Right lobe of liver (tissue), 6 donors: ENCODE measurements at regions of chr3 and their contacts with region 1.

Region 1: GRCh38 chr3:108662130-108662738 is 72.7 kb downstream of the DZIP3 start:
- DNase-seq: no peak
- ATAC-seq: peak; percentile 93 to 99 (median 97)
- H3K4me3 ChIP-seq: no peak overlapping the region
- H3K27ac ChIP-seq: no peak overlapping the region
- H3K4me1 ChIP-seq: no peaks in the 10 kb centered on the region
- H3K27me3 ChIP-seq: no peaks in the 10 kb centered on the region
- CTCF ChIP-seq: peak; percentile 76 to 86 (median 80)
- POLR2A ChIP-seq: no peak

Region 2: GRCh38 chr3:108914774-108915641 is 252.8 kb after region 1 on chr3:
- intact Hi-C with region 1: loop called in 1 of 2 experiments (anchors 10 kb)
- DNase-seq: peak in 2 of 3 donors; percentile 26 to 59
- ATAC-seq: peak; percentile 97 to 99 (median 98)
- H3K4me3 ChIP-seq: no peak overlapping the region
- H3K27ac ChIP-seq: no peak overlapping the region
- H3K4me1 ChIP-seq: no peaks in the 10 kb centered on the region
- H3K27me3 ChIP-seq: no peaks in the 10 kb centered on the region
- CTCF ChIP-seq: peak; percentile 76 to 86 (median 81)
- POLR2A ChIP-seq: no peak